ENCODE measurements at regions of chr1 and their contacts with region 1.

Region 1: GRCh38 chr1:26936823-26937222 is 15.3 kb downstream of the NUDC start:
- DNase-seq: no peak
- ATAC-seq: no peak
- H3K4me3 ChIP-seq: no peak overlapping the region
- H3K27ac ChIP-seq: no peak overlapping the region
- H3K4me1 ChIP-seq: peaks cover 0 to 40% (median 12%) of the 10 kb centered on the region in 12 donors
- H3K27me3 ChIP-seq: no peaks in the 10 kb centered on the region
- CTCF ChIP-seq: no peak
- POLR2A ChIP-seq: no peak

Region 2: GRCh38 chr1:26005434-26006105 is 931.3 kb before region 1 on chr1:
- intact Hi-C with region 1: no loop called
- DNase-seq: no peak
- ATAC-seq: no peak
- H3K4me3 ChIP-seq: no peak overlapping the region
- H3K27ac ChIP-seq: peak overlapping the region in 1 of 12 donors; percentile 19
- H3K4me1 ChIP-seq: peaks cover 0 to 5% (median 0%) of the 10 kb centered on the region in 12 donors
- H3K27me3 ChIP-seq: no peaks in the 10 kb centered on the region
- CTCF ChIP-seq: no peak
- POLR2A ChIP-seq: no peak

Region 3: DNA sequence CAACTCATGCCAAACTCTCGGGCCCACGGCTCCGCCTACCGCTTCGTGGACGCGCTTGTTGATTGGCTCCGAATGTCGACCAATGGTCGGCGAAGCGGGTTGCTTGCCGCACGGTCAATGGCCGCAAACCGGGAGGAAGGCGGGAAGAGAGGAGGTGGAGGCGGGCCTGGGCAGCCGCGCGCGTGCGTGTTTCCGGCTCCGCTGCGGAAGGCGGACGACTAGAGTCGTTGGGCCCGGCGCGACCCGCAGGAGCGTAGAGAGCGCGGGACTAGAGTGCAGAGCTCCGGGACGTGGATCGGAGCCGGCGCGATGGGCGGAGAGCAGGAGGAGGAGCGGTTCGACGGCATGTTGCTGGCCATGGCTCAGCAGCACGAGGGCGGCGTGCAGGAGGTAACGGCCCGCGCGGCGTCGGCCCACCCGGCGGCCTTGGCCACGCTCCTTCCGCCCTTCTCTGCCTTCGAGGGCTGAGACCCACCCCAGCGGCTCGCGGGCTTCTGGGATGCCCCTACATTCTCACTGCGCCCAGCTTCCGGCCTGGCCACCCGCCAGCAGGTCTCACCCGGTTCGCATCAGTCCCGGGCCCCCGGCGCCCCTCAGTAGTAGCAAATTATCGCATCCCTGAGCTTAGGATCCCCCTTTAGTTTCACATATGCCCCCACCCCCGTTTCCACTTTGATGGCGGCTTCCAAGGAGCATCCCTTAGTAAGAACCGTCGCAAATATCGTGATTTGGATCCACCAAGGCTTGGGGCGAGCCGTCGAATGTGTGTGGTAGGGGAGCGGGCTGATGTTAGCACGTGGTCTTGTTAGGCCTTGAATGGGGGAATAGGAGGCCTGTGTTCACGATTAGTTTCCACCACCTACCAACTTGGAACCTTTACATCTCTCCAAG is 15.0 kb before region 1 on chr1 and contains the start of gene NUDC:
- intact Hi-C with region 1: loop called in 1 of 10 experiments (anchors 2 kb)
- DNase-seq: peak; percentile 97 to 98 (median 98)
- ATAC-seq: peak; percentile 99 to 100 (median 99)
- H3K4me3 ChIP-seq: peak within 1 kb of the TSS; percentile 80 to 100 (median 96)
- H3K27ac ChIP-seq: peak within 1 kb of the TSS in 11 of 12 donors; percentile 72 to 94 (median 89)
- H3K4me1 ChIP-seq: peaks cover 0 to 25% (median 17%) of the 10 kb centered on the region in 12 donors
- H3K27me3 ChIP-seq: no peaks in the 10 kb centered on the region
- CTCF ChIP-seq: peak in 1 of 12 donors; percentile 2
- POLR2A ChIP-seq: peak in 1 of 2 donors; percentile 91
- total RNA-seq, gene NUDC: 53.6 to 78.6 (median 57.4) TPM

Region 4: DNA sequence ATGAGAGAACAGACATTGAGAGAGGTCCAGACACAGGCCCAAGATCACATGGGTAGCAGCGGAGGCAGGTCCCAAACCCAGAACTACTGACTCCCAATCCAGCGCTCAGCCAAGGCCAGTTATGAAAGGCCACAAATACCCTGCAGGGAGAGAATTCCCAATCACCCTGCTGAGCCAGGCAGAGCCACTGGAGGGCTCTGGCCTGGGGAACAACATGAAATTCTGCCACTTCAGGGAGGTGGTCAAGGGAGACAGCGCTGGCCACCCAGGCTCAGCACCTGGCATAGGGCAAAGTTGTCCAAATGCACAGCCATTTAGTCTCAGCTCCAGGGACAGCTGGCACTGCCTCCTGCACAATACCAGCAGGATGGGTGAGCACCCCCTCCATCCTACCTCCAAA is 190.6 kb after region 1 on chr1:
- intact Hi-C with region 1: no loop called
- DNase-seq: no peak
- ATAC-seq: no peak
- H3K4me3 ChIP-seq: no peak overlapping the region
- H3K27ac ChIP-seq: no peak overlapping the region
- H3K4me1 ChIP-seq: peaks cover 0 to 43% (median 15%) of the 10 kb centered on the region in 12 donors
- H3K27me3 ChIP-seq: no peaks in the 10 kb centered on the region
- CTCF ChIP-seq: no peak
- POLR2A ChIP-seq: no peak

Region 5: GRCh38 chr1:27525296-27526272 is 588.8 kb after region 1 on chr1:
- intact Hi-C with region 1: no loop called
- DNase-seq: peak; percentile 90 to 94 (median 91)
- ATAC-seq: peak; percentile 73 to 80 (median 78)
- H3K4me3 ChIP-seq: peak overlapping the region in 11 of 12 donors; percentile 7 to 65 (median 49)
- H3K27ac ChIP-seq: peak overlapping the region; percentile 83 to 97 (median 92)
- H3K4me1 ChIP-seq: peaks cover 25 to 93% (median 86%) of the 10 kb centered on the region in 12 donors
- H3K27me3 ChIP-seq: no peaks in the 10 kb centered on the region
- CTCF ChIP-seq: no peak
- POLR2A ChIP-seq: peak in 1 of 2 donors; percentile 16

Measured in heart left ventricle (tissue), 16 donors.